OCI-LY7 (cell line): ENCODE measurements at regions of chr3 and their contacts with region 1.

Region 1: DNA sequence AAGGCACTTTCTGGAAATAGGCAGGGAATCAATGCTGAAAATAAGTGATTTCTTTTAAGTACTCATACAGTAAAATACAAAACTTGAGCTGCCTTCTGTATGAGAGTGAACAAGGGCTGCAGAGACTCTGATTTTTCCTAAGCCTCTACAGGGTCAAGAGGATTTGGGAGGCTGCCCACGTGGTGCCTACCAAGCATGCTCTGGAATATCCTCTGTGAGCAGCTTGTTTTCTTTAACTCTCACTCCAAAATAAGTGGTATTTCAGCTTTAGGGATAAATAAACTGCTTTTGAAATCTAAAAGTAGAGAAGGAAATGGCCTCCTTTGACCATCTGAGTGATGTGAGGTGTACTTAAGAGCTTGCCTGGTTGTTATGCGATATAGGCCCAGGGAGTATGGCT is 8.1 kb upstream of the SELENOK start:
- DNase-seq: no peak
- H3K4me3 ChIP-seq: no peak overlapping the region
- H3K27ac ChIP-seq: no peak overlapping the region
- H3K4me1 ChIP-seq: no peaks in the 10 kb centered on the region
- CTCF ChIP-seq: no peak

Region 2: DNA sequence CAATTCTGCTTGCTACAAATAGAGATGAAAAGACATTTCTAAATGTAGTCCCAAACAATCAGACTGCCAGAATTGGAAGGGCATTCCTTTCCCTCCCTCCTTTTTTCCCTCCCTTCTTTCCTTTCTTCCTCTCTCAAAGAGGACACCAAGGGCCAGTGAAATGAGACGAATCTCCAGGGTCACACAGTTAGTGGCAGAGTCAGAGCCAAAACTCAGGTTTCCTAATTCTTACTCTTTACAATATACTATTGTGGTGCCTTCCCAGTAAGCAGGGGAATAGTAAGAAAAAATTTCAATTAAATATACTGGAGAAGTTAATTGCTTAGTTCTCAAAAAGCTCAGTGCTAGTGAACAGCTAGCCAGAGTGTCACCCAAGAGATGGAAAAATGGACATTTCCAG is 519.4 kb before region 1 on chr3:
- CTCF ChIA-PET with region 1: no interaction called
- POLR2A ChIA-PET with region 1: interaction called, 10 read pairs
- intact Hi-C with region 1: no loop called
- DNase-seq: no peak
- H3K4me3 ChIP-seq: no peak overlapping the region
- H3K27ac ChIP-seq: no peak overlapping the region
- H3K4me1 ChIP-seq: no peaks in the 10 kb centered on the region
- CTCF ChIP-seq: no peak

Region 3: GRCh38 chr3:54120657-54121413 is 221.1 kb after region 1 on chr3:
- CTCF ChIA-PET with region 1: no interaction called
- POLR2A ChIA-PET with region 1: no interaction called
- intact Hi-C with region 1: no loop called
- DNase-seq: peak; percentile 59
- H3K4me3 ChIP-seq: peak overlapping the region; percentile 62
- H3K27ac ChIP-seq: no peak overlapping the region
- H3K4me1 ChIP-seq: peaks cover 8% of the 10 kb centered on the region
- CTCF ChIP-seq: no peak